SK-N-SH (cell line): ENCODE measurements at regions of chr1 and their contacts with region 1.

Region 1: DNA sequence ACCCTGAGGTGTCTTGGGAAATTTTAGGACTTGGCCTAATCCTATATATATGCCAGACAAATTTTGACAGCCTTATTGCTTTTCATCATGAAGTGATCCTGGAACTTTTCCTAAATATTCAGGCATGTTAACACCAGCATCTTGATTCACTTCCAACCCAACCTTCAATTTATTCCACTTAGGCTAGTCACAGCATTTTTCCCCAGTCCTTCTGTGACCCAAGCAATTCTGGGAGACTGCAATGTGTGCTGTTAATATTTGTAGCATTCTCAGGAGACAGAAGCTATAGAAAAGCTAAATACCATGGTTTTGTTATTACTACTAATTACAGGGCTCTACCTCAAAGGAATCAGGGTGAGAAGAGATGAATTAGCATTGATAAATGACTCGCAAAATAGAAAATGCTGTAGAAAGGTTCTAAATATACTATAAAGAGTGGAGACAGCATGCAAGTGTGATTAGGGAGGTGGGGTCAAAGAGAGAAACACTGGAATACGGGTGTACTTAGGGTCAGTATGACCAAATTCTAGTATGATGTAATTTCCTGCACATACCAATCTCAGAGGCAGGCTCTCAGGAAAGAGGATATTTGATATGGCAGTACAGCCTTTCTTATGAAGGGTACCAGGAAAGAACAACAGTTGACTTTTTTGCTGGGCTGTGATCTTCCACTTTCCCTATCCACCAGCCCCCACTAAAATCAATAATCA is 29.1 kb downstream of the PRRX1 start:
- DNase-seq: no peak
- H3K4me3 ChIP-seq: peak overlapping the region in 1 of 2 experiments; percentile 24; a peak in 1 of 4 replicates
- H3K27ac ChIP-seq: peak overlapping the region; percentile 90 to 99
- H3K4me1 ChIP-seq: peaks cover 30 to 70% of the 10 kb centered on the region in 2 experiments
- H3K27me3 ChIP-seq: no peaks in the 10 kb centered on the region
- CTCF ChIP-seq: no peak
- EP300 ChIP-seq: peak in 1 of 2 experiments; percentile 54; a peak in 1 of 4 replicates
- RAD21 ChIP-seq: no peak

Region 2: DNA sequence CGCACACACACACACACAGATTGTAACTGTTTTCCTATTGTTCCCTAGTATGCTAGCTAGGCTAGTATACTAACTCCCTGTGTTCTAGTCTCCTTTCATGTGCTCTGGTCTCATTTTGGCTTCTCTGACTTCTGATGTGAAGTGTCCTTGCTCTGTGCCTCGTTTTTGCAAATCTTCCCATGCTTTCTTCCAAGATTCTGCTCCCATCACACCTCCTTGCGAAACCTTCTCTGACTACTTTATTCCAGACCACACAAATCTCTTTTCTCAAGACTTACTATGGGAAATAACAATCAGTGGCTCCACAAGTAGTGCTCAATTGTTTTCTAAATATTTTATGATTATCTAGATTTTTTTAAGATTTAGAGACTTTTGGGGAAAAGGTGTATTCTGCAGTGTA is 18.8 kb before region 1 on chr1:
- CTCF ChIA-PET with region 1: interaction called, 10 read pairs
- POLR2A ChIA-PET with region 1: no interaction called
- DNase-seq: no peak
- H3K4me3 ChIP-seq: peak overlapping the region in 1 of 2 experiments; percentile 32; a peak in 1 of 4 replicates
- H3K27ac ChIP-seq: peak overlapping the region; percentile 91 to 99; a peak in 3 of 4 replicates
- H3K4me1 ChIP-seq: peaks cover 6 to 45% of the 10 kb centered on the region in 2 experiments
- H3K27me3 ChIP-seq: no peaks in the 10 kb centered on the region
- CTCF ChIP-seq: no peak
- EP300 ChIP-seq: no peak
- RAD21 ChIP-seq: no peak

Region 3: DNA sequence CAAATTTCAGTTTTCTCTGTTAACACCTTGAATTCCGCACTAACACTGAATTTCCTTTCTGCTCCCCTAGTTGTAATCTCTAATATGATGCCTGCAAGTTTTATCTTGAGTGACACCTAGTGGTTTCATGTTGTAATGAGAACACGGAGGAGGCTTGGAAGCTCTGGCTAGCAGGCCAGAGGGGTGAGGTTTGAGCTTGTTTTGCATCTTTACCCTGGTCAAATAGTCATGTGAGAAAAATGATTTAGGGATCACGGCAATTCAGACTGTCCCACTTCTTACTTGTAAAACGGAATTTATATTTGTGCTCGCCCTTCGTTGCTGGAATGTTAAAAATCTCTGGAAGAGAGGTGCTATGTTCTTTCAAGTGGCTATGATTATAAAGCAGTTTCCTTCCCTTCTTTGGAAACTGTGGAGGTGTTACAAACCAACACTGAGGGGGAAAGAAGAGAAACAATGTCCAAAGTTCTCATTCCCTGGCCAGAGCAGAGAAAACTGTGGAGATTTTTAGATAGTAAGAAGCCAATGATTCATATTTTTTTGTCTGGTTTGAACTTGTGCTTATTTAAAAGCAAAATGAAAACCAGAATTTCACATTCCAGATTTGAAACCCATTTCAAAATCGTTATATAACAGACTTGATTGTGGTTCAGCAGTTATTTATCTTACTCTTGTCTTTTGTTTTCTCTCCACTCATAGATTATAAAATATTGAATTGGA is 237.0 kb after region 1 on chr1:
- CTCF ChIA-PET with region 1: interaction called, 15 read pairs
- POLR2A ChIA-PET with region 1: no interaction called
- DNase-seq: peak; percentile 49
- H3K4me3 ChIP-seq: peak overlapping the region; percentile 19 to 38; a peak in 3 of 4 replicates
- H3K27ac ChIP-seq: peak overlapping the region; percentile 84 to 94
- H3K4me1 ChIP-seq: peaks cover 0 to 15% of the 10 kb centered on the region in 2 experiments; a peak in 2 of 4 replicates
- H3K27me3 ChIP-seq: no peaks in the 10 kb centered on the region
- CTCF ChIP-seq: peak; percentile 87
- EP300 ChIP-seq: peak in 1 of 2 experiments; percentile 72; a peak in 2 of 4 replicates
- RAD21 ChIP-seq: peak; percentile 73

Region 4: DNA sequence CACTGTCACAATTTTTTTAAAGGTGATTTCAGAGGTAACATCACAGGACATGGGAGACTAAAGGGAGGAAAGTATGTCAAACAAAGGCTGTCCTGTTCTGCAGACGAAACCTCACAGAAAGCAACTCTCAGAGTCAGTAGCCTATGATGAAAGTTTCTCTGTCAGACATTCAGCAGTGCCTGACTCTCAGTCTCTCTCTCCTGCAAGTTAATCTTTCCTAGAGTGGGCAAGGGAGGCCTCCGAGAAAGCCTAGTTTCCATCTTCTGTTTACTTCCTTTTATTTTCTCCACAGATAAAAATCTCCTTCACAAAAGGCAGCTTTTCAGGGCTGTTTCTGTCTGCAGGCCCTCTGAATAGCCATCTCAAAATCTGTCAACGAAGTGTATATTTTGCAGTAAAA is 467.2 kb after region 1 on chr1:
- CTCF ChIA-PET with region 1: no interaction called
- POLR2A ChIA-PET with region 1: no interaction called
- DNase-seq: no peak
- H3K4me3 ChIP-seq: no peak overlapping the region
- H3K27ac ChIP-seq: no peak overlapping the region
- H3K4me1 ChIP-seq: no peaks in the 10 kb centered on the region
- H3K27me3 ChIP-seq: no peaks in the 10 kb centered on the region; the same call in 1 of the 2 replicates
- CTCF ChIP-seq: no peak
- EP300 ChIP-seq: no peak
- RAD21 ChIP-seq: no peak